Esophagus squamous epithelium (tissue), 5 donors: ENCODE measurements at regions of chr1 and their contacts with region 1.

Region 1: DNA sequence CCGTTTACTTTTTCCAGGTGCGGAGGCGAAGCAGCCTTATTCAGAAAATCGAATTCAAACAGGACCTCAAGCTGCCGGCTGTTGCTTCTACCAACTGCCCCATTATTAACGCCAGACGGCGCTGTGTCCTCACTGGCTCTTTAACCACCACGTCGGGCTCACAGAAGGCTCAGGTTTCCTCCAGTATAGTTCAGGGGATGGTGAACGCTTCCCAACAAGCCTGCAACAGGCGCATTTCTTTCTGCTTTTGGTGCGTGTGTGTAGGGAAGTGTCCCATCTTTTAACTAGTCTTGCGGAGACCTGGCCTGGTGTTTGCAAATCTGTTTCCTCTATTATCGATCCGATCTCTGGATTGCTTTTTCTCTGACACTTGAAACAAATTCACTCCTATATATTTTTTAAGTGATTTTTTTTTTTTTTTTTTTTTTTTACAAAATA is 791 bp upstream of the STUM start:
- DNase-seq: no peak
- H3K4me3 ChIP-seq: peak overlapping the region in 3 of 4 donors; percentile 46 to 73 (median 63)
- H3K27ac ChIP-seq: peak overlapping the region in 2 of 4 donors; percentile 70 to 86
- H3K4me1 ChIP-seq: peaks cover 21 to 44% (median 21%) of the 10 kb centered on the region in 3 donors
- H3K27me3 ChIP-seq: peaks cover 0 to 69% (median 5%) of the 10 kb centered on the region in 4 donors
- CTCF ChIP-seq: peak; percentile 71 to 89 (median 82)
- POLR2A ChIP-seq: no peak

Region 2: GRCh38 chr1:226609836-226610455 is 62.2 kb after region 1 on chr1:
- intact Hi-C with region 1: loop called (anchors 5 kb)
- DNase-seq: no peak
- H3K4me3 ChIP-seq: no peak overlapping the region
- H3K27ac ChIP-seq: no peak overlapping the region
- H3K4me1 ChIP-seq: peaks cover 6 to 17% (median 8%) of the 10 kb centered on the region in 3 donors
- H3K27me3 ChIP-seq: peaks cover 0 to 5% (median 0%) of the 10 kb centered on the region in 4 donors
- CTCF ChIP-seq: no peak
- POLR2A ChIP-seq: no peak